ENCODE measurements at regions of chr1 and their contacts with region 1.

Region 1: GRCh38 chr1:32394141-32394889 is at the start of gene BSDC1:
- DNase-seq: peak; percentile 98
- ATAC-seq: peak; percentile 98
- H3K4me3 ChIP-seq: peak within 1 kb of the TSS; percentile 73
- H3K27ac ChIP-seq: peak within 1 kb of the TSS; percentile 83
- H3K4me1 ChIP-seq: peaks cover 4% of the 10 kb centered on the region
- H3K27me3 ChIP-seq: no peaks in the 10 kb centered on the region
- CTCF ChIP-seq: no peak
- POLR2A ChIP-seq: peak; percentile 91
- RAD21 ChIP-seq: no peak
- total RNA-seq, gene BSDC1: 50.8 and 60.4 TPM in 2 replicates

Region 2: DNA sequence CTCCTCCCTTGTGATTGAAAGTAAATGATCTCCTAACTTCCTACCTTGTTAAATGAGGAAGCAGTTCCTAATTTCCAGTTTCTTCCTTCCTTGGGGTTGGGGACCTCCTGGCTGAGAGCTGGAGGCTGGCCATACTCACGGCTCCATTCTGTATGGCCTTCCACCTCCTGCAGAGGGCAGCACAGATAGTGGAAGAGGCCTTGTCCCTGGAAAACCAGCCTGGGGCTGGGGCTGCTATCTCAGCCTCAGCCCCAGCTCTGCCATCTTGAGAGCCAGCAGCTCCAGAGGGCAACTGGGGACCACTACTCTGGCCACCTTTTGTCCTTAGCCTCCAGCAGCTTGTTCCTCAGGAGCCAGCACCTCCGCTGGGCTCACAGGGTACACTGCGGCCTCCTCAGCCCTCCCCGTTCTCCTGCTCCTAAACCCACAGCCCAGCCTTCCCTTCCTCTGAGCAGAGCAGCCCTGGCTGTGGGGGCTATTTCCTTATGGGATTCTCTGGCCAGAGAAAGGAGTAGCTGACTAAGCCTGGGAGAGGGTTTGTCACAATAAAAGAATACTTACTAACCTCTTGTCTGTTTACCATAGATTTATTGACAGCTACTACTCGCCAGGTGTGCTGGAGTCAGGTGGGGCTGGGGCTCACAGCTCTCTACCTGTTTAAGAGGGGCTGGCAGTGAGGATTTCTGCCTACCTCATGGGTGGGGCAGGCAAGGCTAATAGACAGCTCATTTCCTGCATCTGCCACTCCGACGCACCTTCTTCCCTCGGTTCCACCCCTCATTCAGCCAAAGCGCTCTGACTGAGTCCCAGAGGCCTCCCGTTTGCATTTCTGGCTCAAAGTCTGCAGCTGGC is 178.5 kb before region 1 on chr1:
- CTCF ChIA-PET with region 1: interaction called, 4 read pairs
- POLR2A ChIA-PET with region 1: no interaction called
- dilution Hi-C with region 1: no loop called
- in situ Hi-C with region 1: no loop called
- intact Hi-C with region 1: loop called (anchors 1 kb)
- DNase-seq: peak; percentile 66
- ATAC-seq: peak; percentile 97
- H3K4me3 ChIP-seq: no peak overlapping the region
- H3K27ac ChIP-seq: no peak overlapping the region
- H3K4me1 ChIP-seq: peaks cover 3% of the 10 kb centered on the region; the same call in 1 of the 2 replicates
- H3K27me3 ChIP-seq: no peaks in the 10 kb centered on the region
- CTCF ChIP-seq: peak; percentile 83
- POLR2A ChIP-seq: no peak
- RAD21 ChIP-seq: peak; percentile 91

Region 3: DNA sequence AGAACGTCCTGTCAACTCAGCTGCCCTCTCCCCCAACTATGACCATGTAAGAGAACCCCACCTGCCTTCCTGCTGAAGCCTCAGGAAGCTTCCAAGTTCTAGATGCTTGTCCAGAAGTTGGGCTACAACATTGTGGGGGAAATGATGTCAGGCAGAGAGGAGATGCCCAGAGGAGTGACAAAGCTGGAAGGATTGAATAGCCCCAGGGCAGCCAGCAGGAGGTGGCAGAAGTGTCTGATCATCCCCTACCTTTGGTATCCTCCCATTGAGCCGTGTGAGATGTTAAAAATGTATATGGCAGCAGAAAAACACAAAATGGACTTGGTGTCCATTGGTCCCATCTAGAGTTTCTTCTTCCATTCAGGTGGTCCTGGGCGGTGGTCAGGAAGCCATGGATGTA is 165.5 kb before region 1 on chr1:
- CTCF ChIA-PET with region 1: no interaction called
- POLR2A ChIA-PET with region 1: no interaction called
- dilution Hi-C with region 1: no loop called
- in situ Hi-C with region 1: no loop called
- intact Hi-C with region 1: no loop called
- DNase-seq: no peak
- ATAC-seq: no peak
- H3K4me3 ChIP-seq: no peak overlapping the region
- H3K27ac ChIP-seq: no peak overlapping the region
- H3K4me1 ChIP-seq: no peaks in the 10 kb centered on the region
- H3K27me3 ChIP-seq: no peaks in the 10 kb centered on the region
- CTCF ChIP-seq: no peak
- POLR2A ChIP-seq: no peak
- RAD21 ChIP-seq: no peak

Region 4: GRCh38 chr1:32342704-32343103 is 51.6 kb before region 1 on chr1:
- CTCF ChIA-PET with region 1: interaction called, 10 read pairs
- POLR2A ChIA-PET with region 1: no interaction called
- dilution Hi-C with region 1: no loop called
- in situ Hi-C with region 1: no loop called
- intact Hi-C with region 1: loop called (anchors 5 kb)
- DNase-seq: no peak
- ATAC-seq: no peak
- H3K4me3 ChIP-seq: no peak overlapping the region
- H3K27ac ChIP-seq: no peak overlapping the region
- H3K4me1 ChIP-seq: peaks cover 2% of the 10 kb centered on the region; the same call in 1 of the 2 replicates
- H3K27me3 ChIP-seq: no peaks in the 10 kb centered on the region
- CTCF ChIP-seq: no peak
- POLR2A ChIP-seq: no peak
- RAD21 ChIP-seq: no peak

Region 5: GRCh38 chr1:32413507-32414185 is 19.3 kb after region 1 on chr1:
- CTCF ChIA-PET with region 1: interaction called, 15 read pairs
- POLR2A ChIA-PET with region 1: no interaction called
- dilution Hi-C with region 1: no loop called
- in situ Hi-C with region 1: no loop called
- intact Hi-C with region 1: no loop called
- DNase-seq: peak; percentile 68
- ATAC-seq: peak; percentile 87
- H3K4me3 ChIP-seq: no peak overlapping the region
- H3K27ac ChIP-seq: no peak overlapping the region
- H3K4me1 ChIP-seq: no peaks in the 10 kb centered on the region
- H3K27me3 ChIP-seq: peaks cover 6% of the 10 kb centered on the region
- CTCF ChIP-seq: peak; percentile 77
- POLR2A ChIP-seq: no peak
- RAD21 ChIP-seq: peak; percentile 87

Measured in IMR-90 (cell line).